ENCODE measurements at regions of chr20 and their contacts with region 1.

Region 1: DNA sequence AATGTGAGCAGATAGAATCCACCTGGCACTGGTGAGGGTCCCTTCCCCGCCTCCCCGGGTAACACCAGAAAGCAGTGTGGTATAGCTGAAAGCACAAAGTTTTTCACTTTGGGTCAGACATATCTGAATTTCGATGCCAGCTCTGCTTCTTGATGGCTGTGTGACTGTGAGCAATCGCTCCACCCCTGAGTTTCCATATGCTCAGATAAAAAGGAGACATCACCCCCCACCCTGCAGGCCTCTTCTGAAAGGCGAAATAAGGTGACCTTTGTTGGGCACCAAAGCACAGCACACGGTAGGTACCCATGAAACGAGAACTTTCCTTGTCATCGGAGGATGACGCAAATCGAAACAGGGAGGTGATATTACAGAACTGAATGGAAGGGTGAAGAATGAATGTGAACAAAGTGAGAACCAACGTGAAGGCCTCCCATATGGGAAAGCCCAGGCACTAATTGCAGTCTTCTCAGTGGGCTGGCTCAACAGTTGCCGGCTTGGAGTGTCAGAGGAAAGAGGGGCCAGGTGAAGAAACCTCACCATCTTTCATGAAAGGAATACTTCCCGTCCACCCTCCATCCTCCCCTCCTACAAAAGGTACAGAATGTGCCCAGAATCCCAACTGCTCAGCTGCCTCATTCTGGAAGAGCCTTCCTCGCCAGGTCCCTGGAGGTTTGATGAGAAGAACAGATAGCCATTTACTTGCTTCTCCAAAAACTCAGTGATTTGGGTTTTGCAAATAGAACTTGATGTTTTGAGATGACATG is 61.8 kb downstream of the NFATC2 start:
- DNase-seq: no peak
- H3K4me3 ChIP-seq: no peak overlapping the region
- H3K27ac ChIP-seq: no peak overlapping the region
- H3K4me1 ChIP-seq: no peaks in the 10 kb centered on the region
- H3K27me3 ChIP-seq: no peaks in the 10 kb centered on the region
- CTCF ChIP-seq: no peak

Region 2: DNA sequence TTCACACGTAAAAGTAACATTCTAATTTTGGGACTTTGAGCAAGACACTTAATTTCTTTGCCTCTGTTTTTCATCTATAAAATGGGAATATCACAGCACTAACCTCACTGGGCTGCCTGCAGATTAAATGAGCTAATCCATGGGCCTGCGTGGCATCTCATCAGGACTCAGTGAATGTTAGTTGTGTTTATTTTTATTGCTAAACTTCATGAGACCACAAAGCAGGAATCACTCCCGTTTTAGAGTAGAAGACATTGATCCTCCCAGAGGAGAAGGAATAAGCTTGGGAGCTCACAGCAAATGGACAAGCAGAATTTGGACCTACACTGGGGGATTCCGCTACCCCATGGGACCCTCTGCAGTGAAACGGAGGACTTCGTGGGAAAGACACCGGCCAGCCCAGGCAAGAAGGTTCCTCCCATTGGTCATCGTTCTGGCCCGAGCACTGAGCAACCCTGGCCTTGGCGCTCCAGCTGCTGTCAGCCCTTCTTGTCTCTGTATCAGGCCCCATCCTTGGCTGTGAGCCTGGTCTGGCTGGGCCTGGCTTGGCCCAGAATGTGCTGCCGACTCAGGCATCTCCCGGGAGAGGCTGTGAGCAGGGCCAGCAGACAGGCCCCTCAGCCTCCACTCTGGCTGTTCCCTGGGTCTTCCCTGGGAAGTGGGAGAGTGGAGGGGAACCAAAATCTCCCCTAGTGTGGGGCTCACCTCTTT is 18.0 kb before region 1 on chr20:
- CTCF ChIA-PET with region 1: interaction called, 10 read pairs
- POLR2A ChIA-PET with region 1: no interaction called
- intact Hi-C with region 1: no loop called
- DNase-seq: no peak
- H3K4me3 ChIP-seq: no peak overlapping the region
- H3K27ac ChIP-seq: no peak overlapping the region
- H3K4me1 ChIP-seq: peaks cover 11% of the 10 kb centered on the region
- H3K27me3 ChIP-seq: no peaks in the 10 kb centered on the region
- CTCF ChIP-seq: no peak

Region 3: GRCh38 chr20:51595058-51595532 is 114.4 kb after region 1 on chr20:
- CTCF ChIA-PET with region 1: no interaction called
- POLR2A ChIA-PET with region 1: no interaction called
- intact Hi-C with region 1: no loop called
- DNase-seq: peak; percentile 71 to 79
- H3K4me3 ChIP-seq: no peak overlapping the region
- H3K27ac ChIP-seq: no peak overlapping the region
- H3K4me1 ChIP-seq: peaks cover 10% of the 10 kb centered on the region
- H3K27me3 ChIP-seq: no peaks in the 10 kb centered on the region
- CTCF ChIP-seq: peak; percentile 93

Region 4: DNA sequence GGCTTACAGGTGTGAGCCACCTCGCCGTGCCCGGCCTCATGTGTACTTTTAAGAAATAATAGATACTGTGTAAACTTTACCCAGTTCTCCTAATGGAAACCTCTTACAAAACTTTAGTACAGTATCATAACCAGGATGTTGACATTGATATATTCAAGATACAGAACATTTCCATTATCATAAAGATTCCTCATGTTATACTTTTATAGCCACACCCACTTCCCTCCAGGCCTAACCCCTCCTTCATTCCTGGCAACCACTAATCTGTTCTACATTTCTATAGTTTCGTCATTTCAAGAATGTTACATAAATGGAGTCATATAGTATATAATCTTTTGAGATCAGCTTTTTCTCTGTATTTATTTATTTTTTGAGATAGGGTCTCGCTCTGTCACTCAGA is 374.2 kb after region 1 on chr20:
- CTCF ChIA-PET with region 1: no interaction called
- POLR2A ChIA-PET with region 1: interaction called, 17 read pairs
- intact Hi-C with region 1: no loop called
- DNase-seq: peak in 1 of 2 experiments; percentile 50
- H3K4me3 ChIP-seq: no peak overlapping the region
- H3K27ac ChIP-seq: no peak overlapping the region
- H3K4me1 ChIP-seq: 0 out of 2 replicates have a peak, but pooled peaks cover under 1% of the 10 kb centered on the region
- H3K27me3 ChIP-seq: no peaks in the 10 kb centered on the region
- CTCF ChIP-seq: no peak